Sigmoid colon (tissue), 7 donors: ENCODE measurements at regions of chr16 and their contacts with region 1.

Region 1: GRCh38 chr16:3003582-3004302 is 9.0 kb upstream of the CLDN9 start:
- DNase-seq: peak; percentile 97
- H3K4me3 ChIP-seq: peak overlapping the region in 3 of 4 donors; percentile 25 to 31 (median 27)
- H3K27ac ChIP-seq: no peak overlapping the region
- H3K4me1 ChIP-seq: peaks cover 0 to 7% (median 5%) of the 10 kb centered on the region in 4 donors
- H3K27me3 ChIP-seq: peaks cover 10 to 54% (median 41%) of the 10 kb centered on the region in 3 donors
- CTCF ChIP-seq: peak in 3 of 4 experiments; percentile 7 to 39 (median 19)
- EP300 ChIP-seq: no peak
- POLR2A ChIP-seq: no peak

Region 2: DNA sequence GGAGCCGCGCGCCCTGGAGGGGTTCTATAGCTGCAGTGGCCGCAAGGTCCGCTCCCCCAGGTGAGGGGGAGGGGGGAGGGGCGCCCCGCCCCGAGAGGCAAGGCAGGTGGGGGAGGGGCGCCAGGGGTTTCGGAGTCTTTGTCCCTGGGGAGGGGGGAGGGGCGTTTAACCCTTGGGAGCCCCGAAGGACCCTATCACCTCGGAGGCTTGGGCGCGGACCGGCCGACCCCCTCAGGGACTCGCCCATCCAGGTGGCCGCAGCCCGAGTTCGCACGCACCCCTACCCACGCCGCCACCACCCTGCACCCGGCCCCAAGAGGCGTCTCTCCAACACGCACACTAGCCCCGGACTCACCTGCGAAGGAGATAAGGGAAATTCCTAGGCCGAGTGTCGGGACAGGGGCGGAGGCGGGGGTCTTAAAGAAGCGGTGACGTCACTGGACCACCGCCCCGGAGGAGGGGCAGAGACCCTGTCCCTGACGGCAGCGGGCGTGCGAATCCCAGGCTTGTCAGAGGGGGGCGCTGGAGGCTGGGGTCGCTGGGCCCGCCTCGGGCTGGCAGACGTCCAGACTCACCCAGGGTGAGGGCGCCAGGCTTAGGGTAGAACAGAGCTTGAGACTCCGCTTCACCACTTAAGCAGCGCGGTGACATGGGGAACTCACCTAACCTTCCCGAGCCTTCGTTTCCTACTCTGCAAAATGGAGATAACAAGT is 14.2 kb after region 1 on chr16 and contains the start of gene CLDN6:
- intact Hi-C with region 1: no loop called
- DNase-seq: no peak
- H3K4me3 ChIP-seq: no peak within 1 kb of the TSS
- H3K27ac ChIP-seq: no peak within 1 kb of the TSS
- H3K4me1 ChIP-seq: peaks cover 0 to 40% (median 38%) of the 10 kb centered on the region in 4 donors
- H3K27me3 ChIP-seq: peaks cover 19 to 44% (median 39%) of the 10 kb centered on the region in 3 donors
- CTCF ChIP-seq: no peak
- EP300 ChIP-seq: no peak
- POLR2A ChIP-seq: no peak
- total RNA-seq, gene CLDN6: not detected

Region 3: DNA sequence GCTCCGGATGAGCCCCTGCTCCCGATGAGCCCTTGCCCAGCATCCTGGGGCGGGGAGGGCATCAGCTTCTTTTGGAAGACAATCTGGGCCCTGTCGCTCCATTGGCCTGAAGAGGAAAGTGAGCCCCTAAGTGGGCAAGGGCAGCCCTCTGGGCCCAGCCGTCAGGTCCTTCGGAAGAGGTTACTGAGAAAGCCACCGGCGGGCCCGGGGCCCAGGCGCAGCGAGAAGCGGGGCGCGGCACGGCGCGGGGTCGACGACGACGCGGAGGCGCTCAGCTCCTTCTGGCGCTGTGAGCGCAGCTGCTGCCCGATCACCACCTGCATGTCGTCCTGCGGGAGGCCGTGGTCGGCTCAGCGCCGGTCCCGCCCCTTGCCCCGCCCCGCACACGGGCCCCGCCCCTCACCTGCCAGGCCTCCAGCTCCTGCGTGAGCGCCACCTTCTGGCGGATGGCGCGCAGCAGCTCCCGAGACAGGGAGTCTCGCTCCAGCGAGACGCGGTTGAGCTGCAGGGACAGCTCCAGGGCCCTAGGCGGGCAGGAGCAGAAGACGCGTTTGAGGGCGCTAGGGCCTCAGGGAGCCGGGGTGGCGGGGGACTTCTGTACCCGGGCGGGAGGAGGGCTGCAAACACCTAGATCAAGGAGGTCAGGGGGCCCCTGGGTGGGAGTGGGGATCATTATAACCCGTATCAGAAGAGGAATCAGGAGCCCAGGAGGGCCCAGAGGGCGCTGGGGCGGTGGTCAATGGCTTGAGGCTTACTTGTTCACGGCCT is 24.4 kb after region 1 on chr16:
- intact Hi-C with region 1: loop called (anchors 1 kb)
- DNase-seq: peak; percentile 85
- H3K4me3 ChIP-seq: peak overlapping the region in 1 of 4 donors; percentile 15
- H3K27ac ChIP-seq: no peak overlapping the region
- H3K4me1 ChIP-seq: peaks cover 0 to 43% (median 35%) of the 10 kb centered on the region in 4 donors
- H3K27me3 ChIP-seq: peaks cover 24 to 48% (median 41%) of the 10 kb centered on the region in 3 donors
- CTCF ChIP-seq: peak; percentile 41 to 72 (median 48)
- EP300 ChIP-seq: no peak
- POLR2A ChIP-seq: no peak

Region 4: DNA sequence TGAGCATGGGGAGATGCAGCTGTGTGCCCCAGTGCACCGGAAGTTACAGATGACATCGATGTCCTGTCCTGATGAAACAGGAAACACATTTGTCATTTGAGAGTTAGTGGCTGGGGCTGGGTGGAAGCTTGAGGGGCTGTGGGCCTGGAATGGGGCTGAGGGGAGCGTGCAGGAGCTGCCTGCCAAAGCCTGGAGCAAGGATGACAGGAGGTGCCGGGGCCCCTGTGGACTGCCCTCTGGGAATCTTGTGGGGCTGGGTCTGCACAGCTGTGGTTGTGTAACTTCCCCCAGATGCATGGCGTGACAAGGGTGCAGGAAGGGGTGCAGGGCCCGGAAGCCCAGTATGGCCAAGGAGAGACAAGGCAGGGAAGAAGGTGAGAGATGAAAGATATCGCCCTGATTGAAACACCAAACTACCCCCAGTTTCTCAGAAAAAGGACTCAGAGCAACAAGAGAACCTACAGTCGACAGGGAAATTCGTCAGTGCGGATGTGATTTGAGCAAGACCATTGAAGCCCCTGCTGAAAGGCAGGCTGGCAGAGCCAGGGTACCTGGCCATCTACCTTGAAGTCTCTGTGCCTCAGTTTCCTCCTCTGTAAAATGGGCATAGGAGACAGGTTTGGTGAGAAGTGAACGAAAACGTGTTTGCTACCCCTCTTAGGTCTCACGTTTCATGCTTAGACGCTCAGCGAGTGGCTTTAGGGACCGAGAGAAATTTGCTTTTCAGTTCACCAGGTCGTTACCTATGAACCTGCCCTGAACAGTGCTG is 51.4 kb after region 1 on chr16:
- intact Hi-C with region 1: no loop called
- DNase-seq: no peak
- H3K4me3 ChIP-seq: no peak overlapping the region
- H3K27ac ChIP-seq: no peak overlapping the region
- H3K4me1 ChIP-seq: peaks cover 0 to 22% (median 19%) of the 10 kb centered on the region in 4 donors
- H3K27me3 ChIP-seq: peaks cover 0 to 26% (median 2%) of the 10 kb centered on the region in 3 donors
- CTCF ChIP-seq: no peak
- EP300 ChIP-seq: no peak
- POLR2A ChIP-seq: no peak

Region 5: DNA sequence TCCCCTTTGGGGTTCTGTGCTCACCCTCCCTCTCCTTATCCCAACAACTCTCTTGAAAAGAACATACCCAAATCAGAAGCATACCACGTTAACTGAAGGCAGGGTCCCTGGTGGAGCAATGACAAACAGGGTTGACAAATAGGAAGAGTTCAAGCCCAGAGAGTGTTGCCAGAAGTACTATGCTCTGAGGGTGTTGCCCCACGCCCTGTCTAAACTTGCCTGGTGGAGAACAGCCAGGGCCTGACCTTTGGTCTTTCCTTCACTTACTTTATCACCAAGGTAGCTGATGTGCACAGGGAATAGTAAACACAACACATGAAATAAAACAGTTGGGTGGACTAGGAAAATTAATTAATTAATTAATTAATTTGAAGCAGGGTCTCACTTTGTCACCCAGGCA is 324.9 kb after region 1 on chr16:
- intact Hi-C with region 1: no loop called
- DNase-seq: no peak
- H3K4me3 ChIP-seq: no peak overlapping the region
- H3K27ac ChIP-seq: no peak overlapping the region
- H3K4me1 ChIP-seq: no peaks in the 10 kb centered on the region
- H3K27me3 ChIP-seq: no peaks in the 10 kb centered on the region
- CTCF ChIP-seq: no peak
- EP300 ChIP-seq: no peak
- POLR2A ChIP-seq: no peak